K562 (cell line): ENCODE measurements at regions of chr15 and their contacts with region 1.

Region 1: GRCh38 chr15:64430000-64430735 is 30.2 kb upstream of the ZNF609 start:
- DNase-seq: peak in 3 of 4 experiments; percentile 22 to 80 (median 62)
- ATAC-seq: peak; percentile 93
- H3K4me3 ChIP-seq: no peak overlapping the region
- H3K27ac ChIP-seq: peak overlapping the region; percentile 24; the same call in 1 of the 3 replicates
- H3K4me1 ChIP-seq: peaks cover 3 to 19% of the 10 kb centered on the region in 2 experiments; a peak in 3 of 5 replicates
- H3K27me3 ChIP-seq: no peaks in the 10 kb centered on the region
- CTCF ChIP-seq: no peak
- EP300 ChIP-seq: peak; percentile 88
- POLR2A ChIP-seq: no peak
- RAD21 ChIP-seq: no peak

Region 2: DNA sequence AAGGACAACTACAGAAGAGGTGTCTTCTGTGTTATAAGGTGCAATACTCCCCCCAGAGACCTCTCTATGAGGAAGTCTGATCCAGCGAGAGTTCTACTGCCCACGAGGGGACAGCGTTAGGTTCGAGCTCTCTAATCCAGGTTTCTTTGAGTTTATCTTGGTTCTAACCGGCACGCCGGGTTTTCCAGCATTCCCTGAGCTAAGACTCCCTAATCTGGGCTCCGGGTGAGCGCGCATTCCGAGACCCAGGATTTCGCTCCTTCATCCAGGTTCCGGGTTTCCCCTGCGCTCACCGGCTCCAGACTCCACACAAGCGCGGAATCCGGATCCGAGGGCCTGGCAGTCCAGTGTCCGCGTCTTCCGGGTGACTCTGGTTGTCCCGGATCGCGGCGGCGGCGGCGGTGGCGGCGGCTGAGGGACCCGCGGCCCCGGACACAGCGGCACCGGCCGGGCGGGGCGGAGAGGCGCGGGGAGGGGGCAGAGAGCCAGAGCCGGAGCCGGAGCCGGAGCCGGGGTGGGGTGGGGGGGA is 30.1 kb after region 1 on chr15 and contains the start of gene ZNF609:
- CTCF ChIA-PET with region 1: no interaction called
- POLR2A ChIA-PET with region 1: interaction called, 5 read pairs
- in situ Hi-C with region 1: no loop called
- intact Hi-C with region 1: loop called (anchors 2 kb)
- DNase-seq: peak; percentile 95
- ATAC-seq: peak; percentile 73
- H3K4me3 ChIP-seq: peak within 1 kb of the TSS; percentile 55
- H3K27ac ChIP-seq: peak within 1 kb of the TSS; percentile 88
- H3K4me1 ChIP-seq: peaks cover 6 to 60% of the 10 kb centered on the region in 2 experiments; a peak in 4 of 5 replicates
- H3K27me3 ChIP-seq: no peaks in the 10 kb centered on the region
- CTCF ChIP-seq: no peak
- EP300 ChIP-seq: peak; percentile 62
- POLR2A ChIP-seq: peak; percentile 39; the same call in 1 of the 2 replicates
- RAD21 ChIP-seq: peak in 1 of 2 experiments; percentile 33; a peak in 1 of 4 replicates
- polyA plus RNA-seq, gene ZNF609: 3.0 to 7.6 TPM

Region 3: GRCh38 chr15:64544450-64544849 is 114.3 kb after region 1 on chr15:
- CTCF ChIA-PET with region 1: no interaction called
- POLR2A ChIA-PET with region 1: no interaction called
- in situ Hi-C with region 1: no loop called
- intact Hi-C with region 1: no loop called
- DNase-seq: no peak
- ATAC-seq: no peak
- H3K4me3 ChIP-seq: no peak overlapping the region
- H3K27ac ChIP-seq: no peak overlapping the region
- H3K4me1 ChIP-seq: peaks cover 0 to 8% of the 10 kb centered on the region in 2 experiments; a peak in 1 of 5 replicates
- H3K27me3 ChIP-seq: no peaks in the 10 kb centered on the region
- CTCF ChIP-seq: no peak
- EP300 ChIP-seq: no peak
- POLR2A ChIP-seq: no peak
- RAD21 ChIP-seq: no peak

Region 4: GRCh38 chr15:64566629-64567427 is 136.7 kb after region 1 on chr15:
- CTCF ChIA-PET with region 1: no interaction called
- POLR2A ChIA-PET with region 1: no interaction called
- in situ Hi-C with region 1: no loop called
- intact Hi-C with region 1: loop called (anchors 10 kb)
- DNase-seq: peak; percentile 27 to 56 (median 39)
- ATAC-seq: peak; percentile 84
- H3K4me3 ChIP-seq: no peak overlapping the region
- H3K27ac ChIP-seq: peak overlapping the region; percentile 35; the same call in 2 of the 3 replicates
- H3K4me1 ChIP-seq: peaks cover 10 to 45% of the 10 kb centered on the region in 2 experiments
- H3K27me3 ChIP-seq: no peaks in the 10 kb centered on the region
- CTCF ChIP-seq: no peak
- EP300 ChIP-seq: 0 out of 2 replicates have a peak, but pooled peaks have one; percentile 2
- POLR2A ChIP-seq: no peak
- RAD21 ChIP-seq: 0 out of 4 replicates have a peak, but pooled peaks of 1 of the 2 experiments have one; percentile 7

Region 5: GRCh38 chr15:64651573-64652260 is 221.5 kb after region 1 on chr15:
- CTCF ChIA-PET with region 1: interaction called, 3 read pairs
- POLR2A ChIA-PET with region 1: interaction called, 3 read pairs
- in situ Hi-C with region 1: no loop called
- intact Hi-C with region 1: loop called (anchors 10 kb)
- DNase-seq: peak in 1 of 4 experiments; percentile 10
- ATAC-seq: peak; percentile 67
- H3K4me3 ChIP-seq: no peak overlapping the region
- H3K27ac ChIP-seq: no peak overlapping the region
- H3K4me1 ChIP-seq: no peaks in the 10 kb centered on the region; a peak in 2 of 5 replicates
- H3K27me3 ChIP-seq: no peaks in the 10 kb centered on the region
- CTCF ChIP-seq: no peak
- EP300 ChIP-seq: no peak
- POLR2A ChIP-seq: no peak
- RAD21 ChIP-seq: no peak

Region 6: DNA sequence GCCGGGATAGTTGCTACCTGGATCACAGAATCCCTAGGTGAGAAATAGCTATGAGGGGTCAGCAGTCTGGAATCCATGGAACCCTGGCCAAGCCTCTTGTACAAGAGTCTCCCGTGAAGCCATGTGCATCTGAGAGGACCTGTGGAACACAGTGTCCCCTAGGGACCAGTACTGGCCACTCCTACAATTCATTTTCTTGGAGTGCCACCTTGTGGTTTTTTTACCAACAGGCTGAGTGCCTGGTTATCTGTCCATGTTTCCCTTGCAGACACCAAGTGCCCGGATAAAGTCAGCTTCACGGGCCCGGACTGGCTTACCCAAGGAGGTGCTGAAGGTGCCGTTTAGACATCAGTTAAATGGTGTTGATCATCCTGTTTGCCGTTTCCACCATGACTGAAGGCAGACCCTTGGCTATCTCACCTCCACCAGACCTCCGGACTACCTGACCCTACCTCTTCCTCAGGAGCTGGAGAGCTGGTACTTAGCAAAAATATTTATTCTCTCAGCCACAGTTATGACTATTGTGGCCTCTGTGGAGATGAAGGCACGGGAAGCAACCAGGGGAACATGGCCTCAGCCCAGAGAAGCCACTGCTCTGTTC is 251.4 kb after region 1 on chr15:
- CTCF ChIA-PET with region 1: interaction called, 27 read pairs
- POLR2A ChIA-PET with region 1: no interaction called
- in situ Hi-C with region 1: no loop called
- intact Hi-C with region 1: loop called (anchors 1 kb)
- DNase-seq: peak; percentile 60 to 80 (median 70)
- ATAC-seq: peak; percentile 98
- H3K4me3 ChIP-seq: no peak overlapping the region
- H3K27ac ChIP-seq: no peak overlapping the region
- H3K4me1 ChIP-seq: no peaks in the 10 kb centered on the region; a peak in 1 of 5 replicates
- H3K27me3 ChIP-seq: no peaks in the 10 kb centered on the region
- CTCF ChIP-seq: peak; percentile 91 to 100 (median 99)
- EP300 ChIP-seq: 0 out of 2 replicates have a peak, but pooled peaks have one; percentile 5
- POLR2A ChIP-seq: no peak
- RAD21 ChIP-seq: peak; percentile 93 to 98